ENCODE measurements at regions of chr19 and their contacts with region 1.

Region 1: GRCh38 chr19:52734893-52735661 is at the start of gene ZNF611:
- DNase-seq: peak; percentile 98 to 100 (median 100)
- ATAC-seq: peak; percentile 96
- H3K4me3 ChIP-seq: peak within 1 kb of the TSS; percentile 87 to 92
- H3K4me3 Mint-ChIP-seq: peak within 1 kb of the TSS; percentile 92
- H3K27ac ChIP-seq: peak within 1 kb of the TSS; percentile 88 to 90
- H3K27ac Mint-ChIP-seq: peak within 1 kb of the TSS; percentile 95
- H3K4me1 ChIP-seq: peaks cover 11% of the 10 kb centered on the region
- H3K4me1 Mint-ChIP-seq: peaks cover 30% of the 10 kb centered on the region
- H3K27me3 ChIP-seq: no peaks in the 10 kb centered on the region
- H3K27me3 Mint-ChIP-seq: no peaks in the 10 kb centered on the region
- CTCF ChIP-seq: peak; percentile 61
- total RNA-seq, gene ZNF611: 22.4 to 23.0 TPM

Region 2: GRCh38 chr19:52527134-52527955 is 207.7 kb before region 1 on chr19 and contains the start of gene ZNF808:
- CTCF ChIA-PET with region 1: no interaction called
- POLR2A ChIA-PET with region 1: no interaction called
- intact Hi-C with region 1: loop called (anchors 1 to 2 kb)
- DNase-seq: peak; percentile 96 to 98 (median 97)
- ATAC-seq: peak; percentile 95
- H3K4me3 ChIP-seq: peak within 1 kb of the TSS; percentile 78 to 98
- H3K4me3 Mint-ChIP-seq: peak within 1 kb of the TSS; percentile 98
- H3K27ac ChIP-seq: peak within 1 kb of the TSS; percentile 89 to 97
- H3K27ac Mint-ChIP-seq: peak within 1 kb of the TSS; percentile 99
- H3K4me1 ChIP-seq: peaks cover 13% of the 10 kb centered on the region
- H3K4me1 Mint-ChIP-seq: peaks cover 29% of the 10 kb centered on the region
- H3K27me3 ChIP-seq: no peaks in the 10 kb centered on the region
- H3K27me3 Mint-ChIP-seq: no peaks in the 10 kb centered on the region
- CTCF ChIP-seq: peak; percentile 33
- total RNA-seq, gene ZNF808: 16.4 to 19.2 TPM

Region 3: DNA sequence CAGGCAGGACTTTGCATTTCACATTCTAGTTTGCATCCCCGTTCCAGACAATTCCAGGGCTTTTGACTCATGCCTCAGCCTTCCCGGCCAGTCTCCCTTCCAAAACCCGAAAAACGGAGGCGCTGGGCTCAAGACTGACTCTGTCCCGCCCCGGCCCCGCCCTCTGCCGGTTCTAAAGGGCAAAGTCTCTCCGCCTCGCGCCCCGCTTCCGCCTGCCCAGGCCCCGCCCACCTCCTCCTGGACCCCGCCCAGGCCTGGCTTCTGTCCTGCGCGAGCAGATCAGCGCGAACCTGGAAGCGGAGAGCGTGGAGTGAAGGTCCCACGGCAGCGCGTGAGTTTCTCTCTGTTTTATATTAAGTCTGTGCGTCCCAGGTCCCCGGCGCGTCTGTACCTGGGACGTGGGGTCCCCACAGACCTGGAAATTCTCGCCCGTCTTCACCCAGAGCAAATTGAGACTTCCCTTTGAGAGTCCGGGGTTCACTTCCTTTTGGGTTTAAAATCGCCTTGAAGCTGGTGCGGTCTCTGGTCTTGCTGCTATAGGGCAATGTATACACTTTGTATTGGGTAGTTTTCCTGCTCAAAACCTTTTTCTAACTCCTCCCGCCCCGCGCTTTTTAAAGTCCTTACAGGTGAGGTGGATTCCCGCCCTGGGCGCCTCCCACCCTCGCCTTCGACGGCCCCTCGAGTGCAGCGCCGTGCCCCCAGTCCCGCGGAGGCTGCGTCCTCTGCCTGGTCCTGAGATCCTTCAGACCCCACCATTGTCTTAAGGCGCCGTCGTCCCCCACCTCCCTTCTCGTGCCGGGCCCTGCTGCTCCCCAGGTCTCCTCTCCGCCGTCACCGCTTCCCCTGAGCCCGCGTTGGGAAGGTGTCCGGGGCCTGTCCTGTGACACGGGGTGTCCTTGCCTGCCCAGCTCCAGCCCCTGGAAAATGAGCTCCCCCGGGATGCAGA is 133.8 kb before region 1 on chr19:
- CTCF ChIA-PET with region 1: no interaction called
- POLR2A ChIA-PET with region 1: no interaction called
- intact Hi-C with region 1: loop called (anchors 1 to 10 kb)
- DNase-seq: peak; percentile 86 to 96 (median 93)
- ATAC-seq: peak; percentile 99
- H3K4me3 ChIP-seq: peak overlapping the region; percentile 96 to 98
- H3K4me3 Mint-ChIP-seq: peak overlapping the region; percentile 97
- H3K27ac ChIP-seq: peak overlapping the region; percentile 71
- H3K27ac Mint-ChIP-seq: peak overlapping the region; percentile 90
- H3K4me1 ChIP-seq: peaks cover 13% of the 10 kb centered on the region
- H3K4me1 Mint-ChIP-seq: peaks cover 44% of the 10 kb centered on the region
- H3K27me3 ChIP-seq: no peaks in the 10 kb centered on the region
- H3K27me3 Mint-ChIP-seq: no peaks in the 10 kb centered on the region
- CTCF ChIP-seq: peak; percentile 49

Region 4: GRCh38 chr19:52748336-52748950 is 13.4 kb after region 1 on chr19:
- CTCF ChIA-PET with region 1: no interaction called
- POLR2A ChIA-PET with region 1: interaction called, 3 read pairs
- intact Hi-C with region 1: loop called (anchors 1 kb)
- DNase-seq: peak in 3 of 9 experiments; percentile 33 to 76 (median 65)
- ATAC-seq: peak; percentile 46
- H3K4me3 ChIP-seq: no peak overlapping the region
- H3K4me3 Mint-ChIP-seq: no peak overlapping the region
- H3K27ac ChIP-seq: no peak overlapping the region
- H3K27ac Mint-ChIP-seq: no peak overlapping the region
- H3K4me1 ChIP-seq: no peaks in the 10 kb centered on the region
- H3K4me1 Mint-ChIP-seq: peaks cover 11% of the 10 kb centered on the region
- H3K27me3 ChIP-seq: no peaks in the 10 kb centered on the region
- H3K27me3 Mint-ChIP-seq: no peaks in the 10 kb centered on the region
- CTCF ChIP-seq: peak; percentile 68

Region 5: GRCh38 chr19:52897144-52897935 is 162.3 kb after region 1 on chr19 and contains the start of gene ZNF320:
- CTCF ChIA-PET with region 1: no interaction called
- POLR2A ChIA-PET with region 1: no interaction called
- intact Hi-C with region 1: loop called in 1 of 2 experiments (anchors 2 kb)
- DNase-seq: peak; percentile 80 to 96 (median 90)
- ATAC-seq: peak; percentile 100
- H3K4me3 ChIP-seq: peak within 1 kb of the TSS; percentile 74 to 77
- H3K4me3 Mint-ChIP-seq: peak within 1 kb of the TSS; percentile 93
- H3K27ac ChIP-seq: peak within 1 kb of the TSS; percentile 75
- H3K27ac Mint-ChIP-seq: peak within 1 kb of the TSS; percentile 92
- H3K4me1 ChIP-seq: peaks cover 13% of the 10 kb centered on the region
- H3K4me1 Mint-ChIP-seq: peaks cover 27% of the 10 kb centered on the region
- H3K27me3 ChIP-seq: no peaks in the 10 kb centered on the region
- H3K27me3 Mint-ChIP-seq: no peaks in the 10 kb centered on the region
- CTCF ChIP-seq: no peak
- total RNA-seq, gene ZNF320: 5.5 to 9.5 TPM

Region 6: GRCh38 chr19:52962394-52963246 is 227.5 kb after region 1 on chr19 and contains the start of gene ZNF816:
- CTCF ChIA-PET with region 1: no interaction called
- POLR2A ChIA-PET with region 1: no interaction called
- intact Hi-C with region 1: loop called in 1 of 2 experiments (anchors 10 kb)
- DNase-seq: peak; percentile 98 to 99 (median 99)
- ATAC-seq: peak; percentile 99
- H3K4me3 ChIP-seq: peak within 1 kb of the TSS; percentile 76 to 77
- H3K4me3 Mint-ChIP-seq: peak within 1 kb of the TSS; percentile 94
- H3K27ac ChIP-seq: peak within 1 kb of the TSS; percentile 61 to 67
- H3K27ac Mint-ChIP-seq: peak within 1 kb of the TSS; percentile 95
- H3K4me1 ChIP-seq: peaks cover 9% of the 10 kb centered on the region
- H3K4me1 Mint-ChIP-seq: peaks cover 31% of the 10 kb centered on the region
- H3K27me3 ChIP-seq: no peaks in the 10 kb centered on the region
- H3K27me3 Mint-ChIP-seq: no peaks in the 10 kb centered on the region
- CTCF ChIP-seq: no peak
- total RNA-seq, gene ZNF816: 5.9 to 6.4 TPM